ENCODE measurements at regions of chr2 and their contacts with region 1.

Region 1: GRCh38 chr2:217360781-217361482 is 501.1 kb upstream of the TNP1 start:
- DNase-seq: peak in 1 of 2 donors; percentile 83
- H3K4me3 ChIP-seq: peak overlapping the region in 1 of 2 donors; percentile 10
- H3K27ac ChIP-seq: peak overlapping the region; percentile 83 to 86
- H3K4me1 ChIP-seq: peaks cover 18 to 58% of the 10 kb centered on the region in 2 donors
- H3K27me3 ChIP-seq: no peaks in the 10 kb centered on the region
- CTCF ChIP-seq: no peak

Region 2: DNA sequence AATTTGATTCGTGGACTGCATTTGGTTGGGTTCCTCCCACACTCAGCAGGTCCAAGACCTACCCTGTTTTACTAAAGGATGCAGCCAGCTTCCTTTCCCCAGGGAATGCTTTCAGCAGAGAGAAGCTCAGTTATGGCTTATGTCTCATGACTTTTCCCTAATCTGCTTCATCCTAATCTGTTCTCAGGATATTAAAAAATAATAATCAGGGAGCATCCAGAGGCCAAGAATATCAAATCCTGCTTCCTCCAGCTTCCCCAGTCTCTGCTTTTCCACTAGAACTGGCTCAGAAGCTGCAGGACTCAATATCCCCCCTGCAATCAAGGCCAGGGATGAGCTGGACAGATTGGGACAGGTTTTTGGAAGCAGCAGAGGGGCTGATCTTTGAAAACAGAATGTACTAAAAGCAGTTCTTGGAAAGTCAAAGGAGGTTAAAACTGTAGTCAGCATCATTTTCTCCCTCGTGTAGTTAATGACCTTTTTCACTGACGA is 174.2 kb before region 1 on chr2:
- intact Hi-C with region 1: loop called (anchors 5 kb)
- DNase-seq: peak in 1 of 2 donors; percentile 69
- H3K4me3 ChIP-seq: no peak overlapping the region
- H3K27ac ChIP-seq: peak overlapping the region; percentile 76 to 80
- H3K4me1 ChIP-seq: peaks cover 11 to 45% of the 10 kb centered on the region in 2 donors
- H3K27me3 ChIP-seq: no peaks in the 10 kb centered on the region
- CTCF ChIP-seq: no peak

Region 3: GRCh38 chr2:217223222-217223930 is 137.6 kb before region 1 on chr2:
- intact Hi-C with region 1: loop called (anchors 5 kb)
- DNase-seq: peak; percentile 35 to 88
- H3K4me3 ChIP-seq: no peak overlapping the region
- H3K27ac ChIP-seq: peak overlapping the region; percentile 66 to 70
- H3K4me1 ChIP-seq: peaks cover 3 to 32% of the 10 kb centered on the region in 2 donors
- H3K27me3 ChIP-seq: no peaks in the 10 kb centered on the region
- CTCF ChIP-seq: no peak

Region 4: GRCh38 chr2:217434181-217434975 is 73.4 kb after region 1 on chr2:
- intact Hi-C with region 1: loop called (anchors 5 kb)
- DNase-seq: peak; percentile 62 to 90
- H3K4me3 ChIP-seq: peak overlapping the region; percentile 28 to 32
- H3K27ac ChIP-seq: no peak overlapping the region
- H3K4me1 ChIP-seq: peaks cover 7 to 47% of the 10 kb centered on the region in 2 donors
- H3K27me3 ChIP-seq: no peaks in the 10 kb centered on the region
- CTCF ChIP-seq: no peak

Region 5: GRCh38 chr2:217505303-217505702 is 144.4 kb after region 1 on chr2:
- intact Hi-C with region 1: loop called (anchors 5 kb)
- DNase-seq: no peak
- H3K4me3 ChIP-seq: no peak overlapping the region
- H3K27ac ChIP-seq: no peak overlapping the region
- H3K4me1 ChIP-seq: no peaks in the 10 kb centered on the region
- H3K27me3 ChIP-seq: no peaks in the 10 kb centered on the region
- CTCF ChIP-seq: no peak